Activated CD8-positive, alpha-beta T cell treated with anti-CD3 and anti-CD28 coated beads for 36 hours (primary cell): ENCODE measurements at regions of chrX and their contacts with region 1.

Region 1: GRCh38 chrX:68828740-68829552 is at the start of gene EFNB1:
- DNase-seq: peak; percentile 88
- ATAC-seq: peak; percentile 93
- H3K4me3 Mint-ChIP-seq: peak within 1 kb of the TSS; percentile 79
- H3K27ac Mint-ChIP-seq: peak within 1 kb of the TSS; percentile 75
- H3K4me1 Mint-ChIP-seq: peaks cover 20% of the 10 kb centered on the region
- H3K27me3 Mint-ChIP-seq: no peaks in the 10 kb centered on the region
- CTCF ChIP-seq: no peak
- total RNA-seq, gene EFNB1: 3.1 to 4.2 TPM

Region 2: GRCh38 chrX:68273887-68274286 is 555.1 kb before region 1 on chrX:
- CTCF ChIA-PET with region 1: no interaction called
- POLR2A ChIA-PET with region 1: no interaction called
- intact Hi-C with region 1: no loop called
- DNase-seq: no peak
- ATAC-seq: no peak
- H3K4me3 Mint-ChIP-seq: no peak overlapping the region
- H3K27ac Mint-ChIP-seq: no peak overlapping the region
- H3K4me1 Mint-ChIP-seq: no peaks in the 10 kb centered on the region
- H3K27me3 Mint-ChIP-seq: no peaks in the 10 kb centered on the region
- CTCF ChIP-seq: no peak

Region 3: DNA sequence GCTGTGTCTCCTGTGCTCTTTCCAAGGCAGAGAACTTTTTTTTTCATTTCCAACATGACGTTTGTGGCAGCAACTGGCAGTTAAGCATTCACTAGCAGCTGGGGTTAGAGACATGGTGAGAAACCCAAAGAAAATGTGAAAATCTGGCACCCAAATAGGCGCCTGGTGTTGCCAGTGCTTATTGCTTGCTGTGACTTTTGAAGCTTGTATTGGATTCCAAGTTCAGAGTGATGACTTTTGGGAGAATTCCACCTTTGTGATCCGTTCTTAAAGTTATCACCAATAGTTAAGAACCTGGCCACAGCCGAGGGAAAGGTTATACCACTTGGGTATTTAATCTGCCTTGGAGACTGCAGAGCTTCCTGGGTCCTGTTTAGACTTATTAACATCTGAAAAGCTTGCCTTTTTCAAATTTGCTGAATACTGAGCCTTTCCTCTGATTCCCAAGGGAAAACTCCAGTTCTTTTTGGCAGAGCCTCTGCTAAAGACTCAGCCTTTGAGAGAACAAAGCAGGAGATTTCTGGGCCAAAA is 496.7 kb before region 1 on chrX:
- CTCF ChIA-PET with region 1: no interaction called
- POLR2A ChIA-PET with region 1: no interaction called
- intact Hi-C with region 1: no loop called
- DNase-seq: no peak
- ATAC-seq: no peak
- H3K4me3 Mint-ChIP-seq: no peak overlapping the region
- H3K27ac Mint-ChIP-seq: no peak overlapping the region
- H3K4me1 Mint-ChIP-seq: no peaks in the 10 kb centered on the region
- H3K27me3 Mint-ChIP-seq: no peaks in the 10 kb centered on the region
- CTCF ChIP-seq: no peak

Region 4: DNA sequence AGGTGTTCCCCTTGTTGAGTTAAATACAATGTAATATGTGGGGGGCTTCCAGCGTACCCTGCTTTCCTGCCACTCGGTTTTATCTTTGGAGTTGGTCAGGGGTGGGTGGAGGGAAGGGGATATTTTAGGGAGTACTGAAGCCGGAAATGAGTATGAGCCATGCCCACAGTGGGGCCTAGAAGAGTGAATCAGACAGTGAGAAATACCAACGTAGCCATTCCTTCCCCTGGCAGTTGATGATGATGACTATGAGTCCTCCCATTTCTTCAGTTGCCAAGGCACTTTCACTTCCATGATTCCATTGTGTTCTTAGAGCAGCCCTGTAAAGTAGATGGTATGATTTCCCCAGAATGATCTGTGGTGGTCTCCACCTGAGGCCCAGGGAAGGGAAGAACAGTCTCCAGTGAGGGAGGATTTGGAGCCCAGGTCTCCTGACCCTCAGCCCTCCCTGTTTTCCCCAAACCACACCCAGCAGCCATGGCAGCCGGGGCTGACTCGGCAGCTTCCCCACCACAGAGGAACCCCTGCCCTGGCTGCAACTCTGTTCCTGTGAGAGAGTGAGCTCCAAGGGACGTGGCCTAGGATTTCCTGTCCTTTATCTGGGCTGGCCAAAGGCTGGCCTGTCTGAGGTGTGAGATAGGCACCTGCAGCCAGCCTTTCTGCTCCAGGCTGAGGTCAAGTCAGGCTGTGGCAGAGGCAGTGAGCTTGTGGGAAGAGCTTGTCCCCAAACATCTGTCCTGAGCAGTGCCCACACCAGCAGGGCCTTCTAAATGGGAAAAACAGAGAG is 128.8 kb before region 1 on chrX:
- CTCF ChIA-PET with region 1: no interaction called
- POLR2A ChIA-PET with region 1: no interaction called
- intact Hi-C with region 1: no loop called
- DNase-seq: no peak
- ATAC-seq: no peak
- H3K4me3 Mint-ChIP-seq: no peak overlapping the region
- H3K27ac Mint-ChIP-seq: no peak overlapping the region
- H3K4me1 Mint-ChIP-seq: peaks cover 2% of the 10 kb centered on the region
- H3K27me3 Mint-ChIP-seq: peaks cover 7% of the 10 kb centered on the region
- CTCF ChIP-seq: no peak

Region 5: DNA sequence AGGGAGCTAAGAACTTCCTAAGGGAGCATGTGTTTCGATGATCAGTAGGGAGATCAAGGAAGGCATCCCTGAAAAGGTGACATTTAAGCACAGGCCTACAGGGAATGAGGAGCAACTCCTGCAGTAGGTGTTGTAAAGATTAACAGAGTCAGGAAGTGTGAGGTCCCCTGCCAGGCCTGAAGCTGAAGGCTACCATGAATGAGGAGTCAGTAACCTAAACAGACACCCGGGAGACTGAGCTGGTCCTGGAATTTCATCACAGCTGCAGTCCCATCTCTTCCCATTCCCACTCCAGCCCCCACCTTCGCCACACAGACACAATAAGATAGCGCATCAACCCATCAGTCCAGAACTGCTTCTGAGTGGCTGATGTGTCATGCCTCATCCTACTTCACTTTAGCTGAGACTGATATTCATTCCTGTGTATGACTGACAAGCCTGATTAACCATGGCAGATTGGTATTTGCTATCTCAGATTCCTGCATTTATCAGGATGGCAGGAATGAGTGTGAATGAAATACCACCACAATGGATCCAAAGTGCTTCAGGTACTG is 27.1 kb before region 1 on chrX:
- CTCF ChIA-PET with region 1: no interaction called
- POLR2A ChIA-PET with region 1: no interaction called
- intact Hi-C with region 1: no loop called
- DNase-seq: no peak
- ATAC-seq: no peak
- H3K4me3 Mint-ChIP-seq: no peak overlapping the region
- H3K27ac Mint-ChIP-seq: no peak overlapping the region
- H3K4me1 Mint-ChIP-seq: no peaks in the 10 kb centered on the region
- H3K27me3 Mint-ChIP-seq: peaks cover 3% of the 10 kb centered on the region
- CTCF ChIP-seq: no peak

Region 6: GRCh38 chrX:69165087-69165651 is 336.2 kb after region 1 on chrX and contains the start of gene PJA1:
- CTCF ChIA-PET with region 1: interaction called, 11 read pairs
- POLR2A ChIA-PET with region 1: no interaction called
- intact Hi-C with region 1: no loop called
- DNase-seq: peak; percentile 83
- ATAC-seq: peak; percentile 77
- H3K4me3 Mint-ChIP-seq: peak within 1 kb of the TSS; percentile 75
- H3K27ac Mint-ChIP-seq: peak within 1 kb of the TSS; percentile 83
- H3K4me1 Mint-ChIP-seq: peaks cover 36% of the 10 kb centered on the region
- H3K27me3 Mint-ChIP-seq: peaks cover 1% of the 10 kb centered on the region
- CTCF ChIP-seq: no peak
- total RNA-seq, gene PJA1: 21.0 to 22.6 TPM

Region 7: DNA sequence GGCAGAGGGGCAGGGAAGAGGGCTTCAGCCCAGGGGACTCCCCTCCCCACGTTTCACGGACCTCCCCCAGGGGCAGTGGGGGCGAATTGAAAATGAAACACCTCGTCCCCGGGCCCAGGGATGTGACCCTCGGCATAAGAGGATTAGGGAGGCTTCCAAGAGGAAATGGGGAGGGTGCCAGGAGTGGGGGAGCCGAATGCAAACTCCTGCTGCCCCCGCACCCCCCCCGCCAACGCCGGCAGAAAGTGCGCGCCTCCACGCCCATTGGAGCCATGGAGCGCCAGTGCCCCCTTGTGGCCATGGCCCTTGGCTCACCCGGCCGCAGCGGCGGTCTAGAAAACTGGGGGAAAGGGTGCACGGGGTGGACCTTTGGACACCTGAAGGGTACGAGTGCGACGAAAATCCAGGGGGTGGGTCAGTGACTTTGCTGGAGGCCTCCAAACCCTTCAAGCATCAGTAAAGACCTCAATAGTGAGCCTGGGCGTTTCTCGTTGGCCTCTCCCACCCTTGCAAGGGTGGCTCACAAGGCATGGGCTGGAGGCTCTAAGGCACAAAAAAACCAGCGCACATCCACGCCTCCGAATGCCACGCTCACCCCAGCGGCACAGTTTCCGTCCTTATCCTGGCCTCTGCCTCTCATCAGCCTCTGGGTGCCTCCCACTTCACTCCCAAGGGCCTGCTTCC is 457.1 kb after region 1 on chrX:
- CTCF ChIA-PET with region 1: interaction called, 10 read pairs
- POLR2A ChIA-PET with region 1: no interaction called
- intact Hi-C with region 1: loop called (anchors 10 kb)
- DNase-seq: peak; percentile 53
- ATAC-seq: peak; percentile 84
- H3K4me3 Mint-ChIP-seq: no peak overlapping the region
- H3K27ac Mint-ChIP-seq: no peak overlapping the region
- H3K4me1 Mint-ChIP-seq: no peaks in the 10 kb centered on the region
- H3K27me3 Mint-ChIP-seq: no peaks in the 10 kb centered on the region
- CTCF ChIP-seq: peak; percentile 77